ENCODE measurements at regions of chr3 and their contacts with region 1.

Region 1: GRCh38 chr3:194315088-194315964 is 35.8 kb downstream of the CPN2 start:
- DNase-seq: peak; percentile 77 to 98
- H3K4me3 ChIP-seq: peak overlapping the region in 3 of 4 experiments; percentile 8 to 55 (median 23); a peak in 5 of 8 replicates
- H3K27ac ChIP-seq: no peak overlapping the region
- H3K4me1 ChIP-seq: peaks cover 6 to 23% (median 13%) of the 10 kb centered on the region in 4 experiments
- H3K27me3 ChIP-seq: peaks cover 0 to 27% (median 12%) of the 10 kb centered on the region in 4 experiments; a peak in 5 of 7 replicates
- CTCF ChIP-seq: peak; percentile 83 to 95 (median 89)
- EP300 ChIP-seq: peak in 1 of 2 experiments; percentile 48; a peak in 1 of 3 replicates
- POLR2A ChIP-seq: no peak
- RAD21 ChIP-seq: peak; percentile 98 to 99

Region 2: DNA sequence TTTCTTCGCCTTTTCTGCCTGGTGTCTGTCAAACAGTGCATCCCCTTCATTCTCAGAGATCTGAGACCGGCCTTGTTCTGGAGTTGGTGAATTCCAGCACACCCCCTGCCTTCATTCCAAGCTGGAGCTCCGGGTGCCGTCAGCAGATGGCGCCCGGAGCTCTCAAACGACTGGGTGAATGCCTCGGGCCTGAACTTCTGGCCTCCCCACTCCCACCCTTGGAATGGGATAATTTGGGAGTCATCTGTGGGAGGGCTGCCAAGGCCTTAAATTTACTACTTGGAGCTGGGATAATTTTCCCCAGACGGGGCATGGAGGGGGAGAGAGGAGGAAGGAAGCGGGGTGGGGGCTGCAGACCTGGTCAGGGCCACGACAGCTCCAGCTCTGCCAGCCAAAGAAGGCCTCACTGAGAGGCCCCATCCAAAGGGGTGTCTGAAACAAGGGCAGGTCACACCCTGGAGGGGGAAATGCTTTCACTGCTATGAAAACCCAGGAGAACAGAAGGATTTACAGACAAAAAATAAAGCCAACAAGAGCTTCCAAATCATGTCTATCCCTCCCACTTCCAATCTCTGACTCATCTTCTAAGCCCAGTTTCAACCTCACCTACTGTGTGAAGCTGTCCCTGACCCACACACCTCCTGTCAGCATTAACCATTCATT is 534.4 kb before region 1 on chr3:
- CTCF ChIA-PET with region 1: interaction called, 64 read pairs
- POLR2A ChIA-PET with region 1: no interaction called
- DNase-seq: peak; percentile 50 to 71
- H3K4me3 ChIP-seq: no peak overlapping the region
- H3K27ac ChIP-seq: no peak overlapping the region
- H3K4me1 ChIP-seq: peaks cover 12 to 21% (median 18%) of the 10 kb centered on the region in 4 experiments
- H3K27me3 ChIP-seq: peaks cover 0 to 20% (median 4%) of the 10 kb centered on the region in 4 experiments; a peak in 5 of 7 replicates
- CTCF ChIP-seq: peak; percentile 63 to 88 (median 73)
- EP300 ChIP-seq: no peak
- POLR2A ChIP-seq: no peak
- RAD21 ChIP-seq: peak; percentile 92 to 98

Region 3: GRCh38 chr3:194161131-194162045 is 153.9 kb before region 1 on chr3:
- CTCF ChIA-PET with region 1: interaction called, 24 read pairs
- POLR2A ChIA-PET with region 1: no interaction called
- DNase-seq: no peak
- H3K4me3 ChIP-seq: no peak overlapping the region
- H3K27ac ChIP-seq: no peak overlapping the region
- H3K4me1 ChIP-seq: peaks cover 0 to 6% (median 2%) of the 10 kb centered on the region in 4 experiments; a peak in 5 of 7 replicates
- H3K27me3 ChIP-seq: no peaks in the 10 kb centered on the region; a peak in 1 of 7 replicates
- CTCF ChIP-seq: no peak
- EP300 ChIP-seq: no peak
- POLR2A ChIP-seq: no peak
- RAD21 ChIP-seq: no peak

Region 4: GRCh38 chr3:194250098-194251002 is 65.0 kb before region 1 on chr3:
- CTCF ChIA-PET with region 1: interaction called, 11 read pairs
- POLR2A ChIA-PET with region 1: no interaction called
- DNase-seq: peak in 1 of 2 experiments; percentile 33
- H3K4me3 ChIP-seq: no peak overlapping the region
- H3K27ac ChIP-seq: no peak overlapping the region
- H3K4me1 ChIP-seq: peaks cover 0 to 11% (median 4%) of the 10 kb centered on the region in 4 experiments; a peak in 4 of 7 replicates
- H3K27me3 ChIP-seq: no peaks in the 10 kb centered on the region
- CTCF ChIP-seq: no peak
- EP300 ChIP-seq: no peak
- POLR2A ChIP-seq: no peak
- RAD21 ChIP-seq: no peak

Region 5: GRCh38 chr3:194285024-194285849 is 30.1 kb before region 1 on chr3:
- CTCF ChIA-PET with region 1: interaction called, 26 read pairs
- POLR2A ChIA-PET with region 1: interaction called, 3 read pairs
- DNase-seq: no peak
- H3K4me3 ChIP-seq: no peak overlapping the region; a peak in 1 of 8 replicates
- H3K27ac ChIP-seq: no peak overlapping the region
- H3K4me1 ChIP-seq: peaks cover 20 to 28% (median 21%) of the 10 kb centered on the region in 4 experiments; a peak in 6 of 7 replicates
- H3K27me3 ChIP-seq: no peaks in the 10 kb centered on the region; a peak in 1 of 7 replicates
- CTCF ChIP-seq: no peak
- EP300 ChIP-seq: no peak
- POLR2A ChIP-seq: no peak
- RAD21 ChIP-seq: no peak

Region 6: DNA sequence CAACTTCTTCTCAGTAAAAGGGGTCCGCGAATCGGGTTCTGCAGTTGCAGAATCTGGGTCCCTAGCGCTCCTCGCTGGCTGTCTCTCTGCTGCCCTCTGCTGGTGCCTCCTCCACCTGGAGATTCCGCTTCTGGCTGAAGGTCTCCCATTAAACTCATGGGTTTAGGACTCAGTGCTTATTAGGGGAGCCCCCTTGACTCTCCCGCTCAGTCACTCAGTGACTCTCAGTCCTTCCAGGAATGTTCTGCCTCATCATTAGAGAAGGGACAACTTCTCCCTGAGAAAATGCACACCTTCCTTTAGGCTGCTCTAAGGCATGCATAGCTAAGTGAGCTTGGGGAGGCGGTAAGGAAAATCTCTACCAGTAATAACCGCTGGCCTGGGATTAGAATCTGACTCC is 28.7 kb after region 1 on chr3:
- CTCF ChIA-PET with region 1: interaction called, 12 read pairs
- POLR2A ChIA-PET with region 1: no interaction called
- DNase-seq: peak; percentile 58 to 96
- H3K4me3 ChIP-seq: no peak overlapping the region
- H3K27ac ChIP-seq: no peak overlapping the region
- H3K4me1 ChIP-seq: peaks cover 4 to 22% (median 17%) of the 10 kb centered on the region in 4 experiments
- H3K27me3 ChIP-seq: peaks cover 0 to 20% (median 11%) of the 10 kb centered on the region in 4 experiments; a peak in 6 of 7 replicates
- CTCF ChIP-seq: peak; percentile 86 to 90 (median 90)
- EP300 ChIP-seq: no peak
- POLR2A ChIP-seq: no peak
- RAD21 ChIP-seq: peak; percentile 70 to 81

Measured in H1 (cell line).